Activated T-helper 1 cell treated with anti-CD3 and anti-CD28 coated beads, Interleukin-12 subunit alpha, Interleukin-12 subunit beta, Interleukin-2, Interleukin-4 antibody, amounts not matched to agents 30 ng/mL and 10 ng/mL and 1 ng/mL, durations not matched to agents 14 hours and 24 hours and 36 hours (primary cell): ENCODE measurements at regions of chr7 and their contacts with region 1.

Region 1: DNA sequence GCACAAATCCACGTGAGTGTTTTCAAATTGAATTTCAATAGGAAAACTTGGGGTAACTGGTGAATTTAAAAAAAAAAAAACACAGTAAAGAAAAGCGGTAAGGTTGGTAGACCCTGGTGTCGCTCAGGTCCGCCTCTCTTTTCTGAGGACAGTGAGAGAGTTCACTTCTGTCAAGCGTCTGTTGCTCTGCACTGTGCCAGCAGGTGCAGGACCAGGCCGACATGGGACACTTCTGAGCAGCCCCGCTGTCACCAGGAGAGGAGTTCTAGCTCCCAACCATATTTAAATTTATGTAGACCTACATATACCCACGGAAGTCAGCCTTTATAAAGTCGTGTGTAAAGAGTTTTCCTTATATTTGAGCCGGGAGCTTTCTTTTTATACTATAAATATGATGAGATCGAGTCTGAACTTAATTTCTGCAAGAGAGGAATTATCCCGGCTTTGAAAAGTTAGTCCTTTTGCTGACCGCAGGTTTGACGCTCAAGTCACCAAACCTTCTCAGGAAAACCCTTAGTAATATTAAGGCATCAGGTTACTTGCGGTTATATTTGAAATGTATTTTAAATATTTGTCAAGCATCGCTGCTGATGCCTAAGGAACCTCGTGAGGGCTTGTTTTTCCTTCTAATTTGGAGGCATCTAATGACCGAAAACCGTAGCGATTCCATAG is 531 bp downstream of the IKZF1 start:
- DNase-seq: no peak
- H3K4me3 Mint-ChIP-seq: peak overlapping the region; percentile 99
- H3K27ac Mint-ChIP-seq: peak overlapping the region; percentile 98
- H3K4me1 Mint-ChIP-seq: peaks cover 52% of the 10 kb centered on the region
- H3K27me3 Mint-ChIP-seq: no peaks in the 10 kb centered on the region

Region 2: DNA sequence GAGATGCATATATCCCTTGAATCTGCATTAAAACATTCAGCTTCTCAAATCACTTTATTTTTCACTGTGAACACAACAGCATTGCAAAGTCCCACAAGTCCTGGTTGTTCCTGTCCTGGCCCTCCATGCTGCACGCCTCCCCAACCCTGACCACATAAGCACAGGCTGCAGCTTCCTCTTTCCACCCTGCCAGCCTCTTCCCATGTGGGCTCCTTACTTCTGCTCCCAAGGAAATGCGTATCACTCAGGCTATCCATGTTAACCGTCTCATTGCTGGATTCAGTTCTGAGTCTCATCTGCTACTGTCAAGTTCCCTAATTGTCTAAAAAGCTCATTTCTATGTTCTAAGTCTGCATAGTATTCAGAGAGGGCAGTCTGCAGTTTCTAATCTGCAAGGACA is 122.3 kb before region 1 on chr7:
- intact Hi-C with region 1: no loop called
- DNase-seq: no peak
- H3K4me3 Mint-ChIP-seq: no peak overlapping the region
- H3K27ac Mint-ChIP-seq: no peak overlapping the region
- H3K4me1 Mint-ChIP-seq: no peaks in the 10 kb centered on the region
- H3K27me3 Mint-ChIP-seq: peaks cover 9% of the 10 kb centered on the region

Region 3: DNA sequence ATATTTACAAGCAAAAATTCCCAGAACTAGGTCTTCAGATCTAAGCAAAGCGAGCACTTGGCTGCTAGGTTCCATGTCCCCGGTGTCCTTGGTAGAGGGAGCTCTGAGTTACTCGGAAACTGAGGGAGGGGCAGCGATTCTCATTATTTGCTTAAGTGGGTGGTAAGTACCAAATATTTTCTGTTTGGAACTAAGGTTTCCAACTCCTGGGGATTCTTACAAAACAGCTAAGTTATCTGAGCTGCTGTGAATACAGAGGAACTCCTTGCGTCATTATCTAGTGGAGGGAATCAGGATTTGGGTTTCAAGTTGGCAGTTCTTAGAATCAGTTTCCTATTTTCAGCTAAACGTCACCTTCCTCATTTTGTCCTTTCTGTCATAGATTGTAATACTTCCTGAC is 77.3 kb before region 1 on chr7:
- intact Hi-C with region 1: loop called (anchors 1 kb)
- DNase-seq: no peak
- H3K4me3 Mint-ChIP-seq: peak overlapping the region; percentile 52
- H3K27ac Mint-ChIP-seq: peak overlapping the region; percentile 91
- H3K4me1 Mint-ChIP-seq: peaks cover 46% of the 10 kb centered on the region
- H3K27me3 Mint-ChIP-seq: no peaks in the 10 kb centered on the region

Region 4: GRCh38 chr7:50292763-50293162 is 12.3 kb before region 1 on chr7:
- intact Hi-C with region 1: loop called (anchors 1 kb)
- DNase-seq: no peak
- H3K4me3 Mint-ChIP-seq: no peak overlapping the region
- H3K27ac Mint-ChIP-seq: peak overlapping the region; percentile 24
- H3K4me1 Mint-ChIP-seq: peaks cover 35% of the 10 kb centered on the region
- H3K27me3 Mint-ChIP-seq: peaks cover 8% of the 10 kb centered on the region

Region 5: GRCh38 chr7:50335795-50336754 is 31.0 kb after region 1 on chr7:
- intact Hi-C with region 1: loop called (anchors 1 kb)
- DNase-seq: peak; percentile 71
- H3K4me3 Mint-ChIP-seq: no peak overlapping the region
- H3K27ac Mint-ChIP-seq: no peak overlapping the region
- H3K4me1 Mint-ChIP-seq: peaks cover 33% of the 10 kb centered on the region
- H3K27me3 Mint-ChIP-seq: no peaks in the 10 kb centered on the region

Region 6: GRCh38 chr7:50369143-50370026 is 64.3 kb after region 1 on chr7:
- intact Hi-C with region 1: loop called (anchors 1 kb)
- DNase-seq: no peak
- H3K4me3 Mint-ChIP-seq: peak overlapping the region; percentile 45
- H3K27ac Mint-ChIP-seq: peak overlapping the region; percentile 85
- H3K4me1 Mint-ChIP-seq: peaks cover 100% of the 10 kb centered on the region
- H3K27me3 Mint-ChIP-seq: no peaks in the 10 kb centered on the region